Activated naive CD4-positive, alpha-beta T cell treated with anti-CD3 and anti-CD28 coated beads for 36 hours (primary cell): ENCODE measurements at regions of chr4 and their contacts with region 1.

Region 1: DNA sequence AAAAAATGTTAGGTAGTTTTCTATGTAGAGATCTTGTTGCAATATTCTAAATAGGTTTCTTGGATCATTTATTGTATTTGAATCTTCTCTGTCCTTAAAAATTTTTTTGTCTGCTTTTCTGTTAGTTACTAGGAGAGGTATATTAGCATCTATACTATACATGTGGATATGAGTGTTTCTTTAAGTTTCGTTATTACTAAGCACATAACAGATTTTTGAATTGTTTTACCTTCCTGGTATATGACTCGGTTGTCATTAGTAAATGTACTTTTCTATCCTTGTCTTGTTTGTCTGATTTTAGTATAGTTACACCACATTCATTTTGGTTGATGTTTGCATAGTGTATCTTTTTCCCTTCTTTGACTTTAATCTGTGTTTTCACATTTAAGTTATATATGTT is 20.2 kb downstream of the PYURF start:
- DNase-seq: no peak
- H3K4me3 Mint-ChIP-seq: no peak overlapping the region
- H3K27ac Mint-ChIP-seq: no peak overlapping the region
- H3K4me1 Mint-ChIP-seq: peaks cover 4% of the 10 kb centered on the region
- H3K27me3 Mint-ChIP-seq: no peaks in the 10 kb centered on the region

Region 2: GRCh38 chr4:88489100-88489761 is 14.1 kb before region 1 on chr4:
- CTCF ChIA-PET with region 1: no interaction called
- intact Hi-C with region 1: loop called (anchors 1 kb)
- DNase-seq: no peak
- H3K4me3 Mint-ChIP-seq: no peak overlapping the region
- H3K27ac Mint-ChIP-seq: peak overlapping the region; percentile 54
- H3K4me1 Mint-ChIP-seq: peaks cover 12% of the 10 kb centered on the region
- H3K27me3 Mint-ChIP-seq: no peaks in the 10 kb centered on the region

Region 3: DNA sequence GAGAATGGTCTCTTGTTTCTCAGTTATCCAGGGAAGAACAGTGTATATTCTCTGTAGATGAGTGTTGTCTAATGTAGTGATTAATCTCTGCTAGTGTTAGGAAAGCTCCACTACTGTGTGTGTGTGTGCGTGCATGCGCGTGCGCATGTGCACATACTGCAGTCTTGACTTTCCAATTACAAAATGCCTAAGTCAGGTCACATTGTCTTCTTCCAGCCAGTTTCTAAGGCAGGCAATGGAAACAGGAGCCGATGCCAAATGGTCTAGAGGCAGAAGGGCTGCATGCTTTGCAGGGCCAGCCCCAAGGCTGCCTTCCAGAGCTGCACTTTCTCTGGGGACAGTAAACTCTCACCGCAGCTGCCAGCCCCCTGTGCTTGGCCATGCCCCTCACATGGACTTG is 224.8 kb after region 1 on chr4:
- CTCF ChIA-PET with region 1: no interaction called
- intact Hi-C with region 1: no loop called
- DNase-seq: no peak
- H3K4me3 Mint-ChIP-seq: no peak overlapping the region
- H3K27ac Mint-ChIP-seq: no peak overlapping the region
- H3K4me1 Mint-ChIP-seq: no peaks in the 10 kb centered on the region
- H3K27me3 Mint-ChIP-seq: no peaks in the 10 kb centered on the region